ENCODE measurements at regions of chr7 and their contacts with region 1.

Region 1: DNA sequence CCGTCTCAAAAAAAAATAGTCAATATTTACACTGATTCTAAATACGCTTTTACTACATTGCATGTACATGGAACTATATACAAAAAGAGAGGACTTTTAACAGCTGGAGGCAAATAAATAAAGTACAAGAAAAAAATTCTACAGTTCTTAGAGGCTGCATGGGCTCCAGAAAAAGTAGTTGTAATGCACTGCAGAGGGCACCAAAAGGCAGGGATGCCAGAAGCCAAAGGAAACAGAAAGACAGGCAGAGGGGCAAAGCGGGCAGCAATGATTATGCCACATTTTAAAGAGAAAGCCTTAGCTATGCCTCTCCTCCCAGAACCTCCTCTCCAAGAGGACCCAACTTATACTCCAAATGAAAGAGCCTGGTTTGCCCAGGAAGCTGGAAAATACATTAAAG is 11.6 kb upstream of the ADCK2 start:
- DNase-seq: no peak
- H3K4me3 ChIP-seq: no peak overlapping the region
- CTCF ChIP-seq: peak; percentile 18

Region 2: GRCh38 chr7:141014524-141015395 is 353.6 kb after region 1 on chr7 and contains the start of gene MRPS33:
- CTCF ChIA-PET with region 1: interaction called, 19 read pairs
- POLR2A ChIA-PET with region 1: interaction called, 3 read pairs
- DNase-seq: peak; percentile 79
- H3K4me3 ChIP-seq: peak within 1 kb of the TSS; percentile 85
- CTCF ChIP-seq: peak; percentile 87